ENCODE measurements at regions of chr1 and their contacts with region 1.

Region 1: DNA sequence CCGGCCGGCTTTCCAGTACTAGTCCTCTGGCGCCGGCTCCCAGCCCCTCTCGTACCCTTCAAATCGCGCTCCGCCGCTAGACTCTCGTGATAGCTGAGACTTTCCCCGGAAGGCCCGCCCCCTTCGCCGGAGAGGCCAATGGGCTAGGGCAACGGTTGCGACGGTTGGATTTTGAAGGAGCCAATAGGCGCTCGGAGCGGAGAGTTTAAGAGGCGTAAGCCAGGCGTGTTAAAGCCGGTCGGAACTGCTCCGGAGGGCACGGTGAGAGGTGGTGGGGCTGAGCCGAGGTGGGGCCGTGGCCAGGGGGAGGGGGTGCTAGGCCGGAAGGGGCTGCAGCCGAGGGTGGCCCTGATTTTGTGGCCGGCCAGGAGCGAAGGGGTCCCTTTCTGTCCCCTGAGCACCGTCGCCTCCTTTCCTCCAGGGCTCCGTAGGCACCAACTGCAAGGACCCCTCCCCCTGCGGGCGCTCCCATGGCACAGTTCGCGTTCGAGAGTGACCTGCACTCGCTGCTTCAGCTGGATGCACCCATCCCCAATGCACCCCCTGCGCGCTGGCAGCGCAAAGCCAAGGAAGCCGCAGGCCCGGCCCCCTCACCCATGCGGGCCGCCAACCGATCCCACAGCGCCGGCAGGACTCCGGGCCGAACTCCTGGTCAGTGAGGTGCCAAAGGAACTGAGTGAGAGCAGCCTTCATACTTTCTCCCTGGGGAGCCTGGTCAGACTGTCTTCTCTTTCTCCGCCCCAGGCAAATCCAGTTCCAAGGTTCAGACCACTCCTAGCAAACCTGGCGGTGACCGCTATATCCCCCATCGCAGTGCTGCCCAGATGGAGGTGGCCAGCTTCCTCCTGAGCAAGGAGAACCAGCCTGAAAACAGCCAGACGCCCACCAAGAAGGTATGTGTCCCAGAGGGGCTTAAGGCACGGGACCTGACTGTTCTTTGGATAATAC is at the start of gene CDC20:
- DNase-seq: peak; percentile 97 to 98
- H3K4me3 ChIP-seq: peak within 1 kb of the TSS; percentile 96
- H3K4me3 Mint-ChIP-seq: peak within 1 kb of the TSS; percentile 93
- H3K27ac Mint-ChIP-seq: peak within 1 kb of the TSS; percentile 97
- H3K4me1 ChIP-seq: peaks cover 24% of the 10 kb centered on the region
- H3K4me1 Mint-ChIP-seq: peaks cover 27% of the 10 kb centered on the region
- H3K27me3 ChIP-seq: no peaks in the 10 kb centered on the region
- H3K27me3 Mint-ChIP-seq: no peaks in the 10 kb centered on the region
- CTCF ChIP-seq: no peak
- total RNA-seq, gene CDC20: 123 and 125 TPM in 2 replicates

Region 2: GRCh38 chr1:43206600-43207228 is 152.3 kb before region 1 on chr1:
- CTCF ChIA-PET with region 1: no interaction called
- POLR2A ChIA-PET with region 1: no interaction called
- intact Hi-C with region 1: no loop called
- DNase-seq: peak; percentile 89 to 95
- H3K4me3 ChIP-seq: no peak overlapping the region
- H3K4me3 Mint-ChIP-seq: peak overlapping the region; percentile 53
- H3K27ac Mint-ChIP-seq: peak overlapping the region; percentile 93
- H3K4me1 ChIP-seq: peaks cover 32% of the 10 kb centered on the region
- H3K4me1 Mint-ChIP-seq: no peaks in the 10 kb centered on the region
- H3K27me3 ChIP-seq: no peaks in the 10 kb centered on the region
- H3K27me3 Mint-ChIP-seq: no peaks in the 10 kb centered on the region
- CTCF ChIP-seq: no peak

Region 3: GRCh38 chr1:43227143-43227764 is 131.8 kb before region 1 on chr1:
- CTCF ChIA-PET with region 1: interaction called, 14 read pairs
- POLR2A ChIA-PET with region 1: no interaction called
- intact Hi-C with region 1: loop called (anchors 2 kb)
- DNase-seq: peak; percentile 84 to 87
- H3K4me3 ChIP-seq: no peak overlapping the region
- H3K4me3 Mint-ChIP-seq: no peak overlapping the region
- H3K27ac Mint-ChIP-seq: peak overlapping the region; percentile 57
- H3K4me1 ChIP-seq: peaks cover 11% of the 10 kb centered on the region
- H3K4me1 Mint-ChIP-seq: peaks cover 23% of the 10 kb centered on the region
- H3K27me3 ChIP-seq: no peaks in the 10 kb centered on the region
- H3K27me3 Mint-ChIP-seq: no peaks in the 10 kb centered on the region
- CTCF ChIP-seq: peak; percentile 78 to 84

Region 4: DNA sequence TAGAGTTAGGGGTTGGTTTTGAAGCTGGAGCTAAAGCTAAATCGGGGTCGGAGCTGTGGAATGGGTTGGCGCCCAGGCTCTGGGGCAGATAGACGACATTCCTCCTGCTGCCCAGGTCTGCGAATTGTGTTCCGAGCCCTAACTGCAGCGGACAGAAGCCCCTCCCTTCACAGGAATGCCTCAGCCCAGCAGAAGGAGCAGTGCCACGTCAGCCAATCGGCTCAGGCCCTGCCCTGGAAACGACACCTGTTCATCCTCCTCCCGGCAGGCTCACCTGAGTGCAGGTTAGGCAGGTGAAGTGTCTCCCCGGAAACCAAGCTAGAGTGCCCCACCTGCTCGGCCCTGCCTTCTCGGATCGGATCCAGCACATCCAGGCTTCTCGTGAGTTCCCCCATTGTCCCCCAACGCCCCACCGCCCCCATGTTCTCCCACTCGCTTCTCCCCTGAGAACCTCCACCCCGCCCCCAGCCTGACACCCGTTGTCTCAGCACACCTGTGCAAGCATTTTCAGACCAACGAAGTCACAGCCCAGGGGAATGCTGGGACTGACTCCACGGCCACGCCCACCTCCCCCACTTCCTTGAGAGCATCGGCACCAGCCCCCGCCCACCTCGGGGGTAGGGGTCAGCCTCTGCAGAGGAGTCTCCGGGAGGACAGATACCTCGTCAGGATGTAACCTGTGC is 88.5 kb before region 1 on chr1:
- CTCF ChIA-PET with region 1: no interaction called
- POLR2A ChIA-PET with region 1: interaction called, 13 read pairs
- intact Hi-C with region 1: loop called (anchors 1 kb)
- DNase-seq: peak; percentile 91 to 95
- H3K4me3 ChIP-seq: peak overlapping the region; percentile 45
- H3K4me3 Mint-ChIP-seq: peak overlapping the region; percentile 87
- H3K27ac Mint-ChIP-seq: peak overlapping the region; percentile 99
- H3K4me1 ChIP-seq: peaks cover 16% of the 10 kb centered on the region
- H3K4me1 Mint-ChIP-seq: peaks cover 17% of the 10 kb centered on the region
- H3K27me3 ChIP-seq: no peaks in the 10 kb centered on the region
- H3K27me3 Mint-ChIP-seq: no peaks in the 10 kb centered on the region
- CTCF ChIP-seq: no peak

Region 5: GRCh38 chr1:43348809-43349583 is 10.0 kb before region 1 on chr1:
- CTCF ChIA-PET with region 1: interaction called, 16 read pairs
- POLR2A ChIA-PET with region 1: interaction called, 20 read pairs
- intact Hi-C with region 1: loop called (anchors 1 kb)
- DNase-seq: peak; percentile 93 to 94
- H3K4me3 ChIP-seq: peak overlapping the region; percentile 48
- H3K4me3 Mint-ChIP-seq: peak overlapping the region; percentile 74
- H3K27ac Mint-ChIP-seq: peak overlapping the region; percentile 96
- H3K4me1 ChIP-seq: no peaks in the 10 kb centered on the region; the same call in 1 of the 2 replicates
- H3K4me1 Mint-ChIP-seq: peaks cover 23% of the 10 kb centered on the region
- H3K27me3 ChIP-seq: no peaks in the 10 kb centered on the region
- H3K27me3 Mint-ChIP-seq: no peaks in the 10 kb centered on the region
- CTCF ChIP-seq: no peak

Region 6: GRCh38 chr1:43414634-43415223 is 55.7 kb after region 1 on chr1:
- CTCF ChIA-PET with region 1: interaction called, 14 read pairs
- POLR2A ChIA-PET with region 1: interaction called, 5 read pairs
- intact Hi-C with region 1: no loop called
- DNase-seq: peak; percentile 68 to 76
- H3K4me3 ChIP-seq: no peak overlapping the region
- H3K4me3 Mint-ChIP-seq: no peak overlapping the region
- H3K27ac Mint-ChIP-seq: no peak overlapping the region
- H3K4me1 ChIP-seq: no peaks in the 10 kb centered on the region
- H3K4me1 Mint-ChIP-seq: no peaks in the 10 kb centered on the region
- H3K27me3 ChIP-seq: no peaks in the 10 kb centered on the region
- H3K27me3 Mint-ChIP-seq: no peaks in the 10 kb centered on the region
- CTCF ChIP-seq: peak; percentile 63 to 66